ENCODE measurements at regions of chr17 and their contacts with region 1.

Region 1: DNA sequence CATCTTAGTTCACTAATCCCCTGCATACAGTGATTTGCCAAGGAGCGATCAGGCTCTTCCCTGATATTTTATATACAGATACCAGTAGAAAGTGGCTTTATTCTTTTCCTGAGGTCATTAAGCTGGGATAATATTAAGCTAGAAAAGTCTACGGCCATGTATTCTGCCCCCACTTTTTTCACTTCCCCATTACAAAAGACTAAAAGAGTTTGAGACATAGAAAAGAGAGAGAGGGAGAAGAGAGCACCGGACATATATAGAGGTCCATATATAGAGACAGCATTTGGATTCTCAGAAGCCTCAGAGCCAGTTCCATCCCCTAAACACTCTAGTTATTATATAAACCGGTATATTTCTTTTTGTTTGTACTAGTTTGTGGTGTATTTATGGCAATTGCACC is 166.5 kb upstream of the ANKFN1 start:
- DNase-seq: no peak
- H3K4me3 ChIP-seq: no peak overlapping the region
- H3K27ac ChIP-seq: no peak overlapping the region
- H3K4me1 ChIP-seq: no peaks in the 10 kb centered on the region
- H3K27me3 ChIP-seq: no peaks in the 10 kb centered on the region
- CTCF ChIP-seq: no peak
- EP300 ChIP-seq: no peak
- POLR2A ChIP-seq: no peak

Region 2: DNA sequence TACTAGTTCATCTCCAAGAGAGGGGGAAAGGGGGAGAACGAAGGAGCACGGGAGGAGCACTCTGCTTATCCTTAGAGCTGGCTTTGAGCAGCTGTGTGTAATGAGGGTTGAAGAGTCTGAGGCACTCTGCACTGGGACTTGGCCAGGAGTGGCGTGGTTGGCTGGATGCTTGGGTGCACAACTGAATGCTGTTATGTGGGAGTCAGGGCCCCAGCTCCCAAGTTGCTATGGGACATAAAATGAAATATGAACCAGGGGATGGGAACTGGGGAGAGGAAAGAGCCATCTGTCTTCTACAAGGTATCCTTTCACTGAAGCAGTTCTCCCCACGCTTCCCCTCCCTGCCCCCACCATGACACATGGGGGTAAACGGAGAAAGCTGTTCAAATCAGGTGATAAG is 60.5 kb after region 1 on chr17:
- in situ Hi-C with region 1: loop called in 1 of 4 experiments (anchors 10 kb)
- intact Hi-C with region 1: no loop called
- DNase-seq: no peak
- H3K4me3 ChIP-seq: no peak overlapping the region
- H3K27ac ChIP-seq: no peak overlapping the region
- H3K4me1 ChIP-seq: no peaks in the 10 kb centered on the region
- H3K27me3 ChIP-seq: peaks cover 6% of the 10 kb centered on the region
- CTCF ChIP-seq: no peak
- EP300 ChIP-seq: no peak
- POLR2A ChIP-seq: no peak